ENCODE measurements at regions of chr20 and their contacts with region 1.

Region 1: DNA sequence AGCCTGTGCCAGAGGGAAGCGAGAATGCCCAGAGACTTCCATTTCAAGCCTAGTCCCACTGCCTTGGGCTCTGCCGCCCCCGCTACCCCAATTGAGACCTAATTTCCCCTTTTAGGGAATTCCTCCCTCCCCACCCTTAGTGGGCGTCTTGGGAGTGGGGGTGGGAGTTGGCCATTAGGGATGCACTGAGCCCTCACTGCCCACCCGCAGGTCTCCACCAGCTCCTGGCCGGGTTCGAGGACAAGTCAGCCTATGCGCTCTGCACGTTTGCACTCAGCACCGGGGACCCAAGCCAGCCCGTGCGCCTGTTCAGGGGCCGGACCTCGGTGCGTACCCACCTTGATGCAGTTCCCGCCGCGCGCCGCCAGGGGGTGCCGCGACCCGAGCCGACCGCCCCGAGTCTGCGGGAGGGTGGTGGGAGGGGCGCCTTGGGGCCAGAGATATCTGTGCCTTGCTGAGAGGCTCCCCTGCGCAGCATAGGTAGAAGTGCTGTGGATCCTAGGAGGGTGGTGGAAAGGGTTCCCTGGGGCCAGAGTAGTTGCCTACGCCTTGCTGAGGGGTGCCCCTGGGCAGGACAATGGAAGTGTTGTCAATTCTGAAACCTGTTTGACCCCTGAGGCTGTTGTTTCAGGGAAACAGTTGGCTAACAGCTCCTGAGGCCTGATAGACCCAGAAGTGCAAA is 9.2 kb downstream of the ITPA start:
- DNase-seq: peak; percentile 79
- ATAC-seq: peak; percentile 70
- H3K4me3 ChIP-seq: no peak overlapping the region
- H3K4me3 Mint-ChIP-seq: no peak overlapping the region
- H3K27ac ChIP-seq: no peak overlapping the region
- H3K27ac Mint-ChIP-seq: no peak overlapping the region
- H3K4me1 ChIP-seq: peaks cover 20 to 28% of the 10 kb centered on the region in 2 donors
- H3K4me1 Mint-ChIP-seq: peaks cover 19% of the 10 kb centered on the region
- H3K27me3 ChIP-seq: no peaks in the 10 kb centered on the region
- H3K27me3 Mint-ChIP-seq: no peaks in the 10 kb centered on the region
- CTCF ChIP-seq: peak; percentile 96

Region 2: GRCh38 chr20:3204124-3204822 is 14.2 kb before region 1 on chr20 and contains the start of gene DDRGK1:
- CTCF ChIA-PET with region 1: interaction called, 5 read pairs
- POLR2A ChIA-PET with region 1: interaction called, 9 read pairs
- intact Hi-C with region 1: loop called (anchors 1 kb)
- DNase-seq: peak; percentile 96
- ATAC-seq: peak; percentile 93
- H3K4me3 ChIP-seq: peak within 1 kb of the TSS; percentile 73 to 89 (median 84)
- H3K4me3 Mint-ChIP-seq: peak within 1 kb of the TSS; percentile 97
- H3K27ac ChIP-seq: peak within 1 kb of the TSS; percentile 80
- H3K27ac Mint-ChIP-seq: peak within 1 kb of the TSS; percentile 96
- H3K4me1 ChIP-seq: peaks cover 15% of the 10 kb centered on the region in 2 donors
- H3K4me1 Mint-ChIP-seq: peaks cover 20% of the 10 kb centered on the region
- H3K27me3 ChIP-seq: no peaks in the 10 kb centered on the region
- H3K27me3 Mint-ChIP-seq: no peaks in the 10 kb centered on the region
- CTCF ChIP-seq: no peak
- total RNA-seq, gene DDRGK1: 51.9 and 55.5 TPM in 2 replicates

Region 3: GRCh38 chr20:3239026-3239866 is 20.8 kb after region 1 on chr20 and contains the start of gene SLC4A11:
- CTCF ChIA-PET with region 1: interaction called, 6 read pairs
- POLR2A ChIA-PET with region 1: no interaction called
- intact Hi-C with region 1: loop called (anchors 2 kb)
- DNase-seq: peak; percentile 60
- ATAC-seq: peak; percentile 62
- H3K4me3 ChIP-seq: peak within 1 kb of the TSS; percentile 23 to 64 (median 56)
- H3K4me3 Mint-ChIP-seq: peak within 1 kb of the TSS; percentile 92
- H3K27ac ChIP-seq: no peak within 1 kb of the TSS
- H3K27ac Mint-ChIP-seq: peak within 1 kb of the TSS; percentile 15
- H3K4me1 ChIP-seq: peaks cover 18 to 22% of the 10 kb centered on the region in 2 donors
- H3K4me1 Mint-ChIP-seq: peaks cover 19% of the 10 kb centered on the region
- H3K27me3 ChIP-seq: peaks cover 0 to 70% (median 23%) of the 10 kb centered on the region in 4 experiments
- H3K27me3 Mint-ChIP-seq: peaks cover 48% of the 10 kb centered on the region
- CTCF ChIP-seq: no peak
- total RNA-seq, gene SLC4A11: 1.6 and 2.7 TPM in 2 replicates

Region 4: GRCh38 chr20:3276680-3277015 is 58.2 kb after region 1 on chr20:
- CTCF ChIA-PET with region 1: interaction called, 14 read pairs
- POLR2A ChIA-PET with region 1: no interaction called
- intact Hi-C with region 1: no loop called
- DNase-seq: no peak
- ATAC-seq: no peak
- H3K4me3 ChIP-seq: no peak overlapping the region
- H3K4me3 Mint-ChIP-seq: no peak overlapping the region
- H3K27ac ChIP-seq: no peak overlapping the region
- H3K27ac Mint-ChIP-seq: no peak overlapping the region
- H3K4me1 ChIP-seq: no peaks in the 10 kb centered on the region
- H3K4me1 Mint-ChIP-seq: no peaks in the 10 kb centered on the region
- H3K27me3 ChIP-seq: no peaks in the 10 kb centered on the region
- H3K27me3 Mint-ChIP-seq: no peaks in the 10 kb centered on the region
- CTCF ChIP-seq: no peak

Region 5: GRCh38 chr20:3312940-3313682 is 94.7 kb after region 1 on chr20:
- CTCF ChIA-PET with region 1: interaction called, 76 read pairs
- POLR2A ChIA-PET with region 1: no interaction called
- intact Hi-C with region 1: no loop called
- DNase-seq: no peak
- ATAC-seq: no peak
- H3K4me3 ChIP-seq: no peak overlapping the region
- H3K4me3 Mint-ChIP-seq: no peak overlapping the region
- H3K27ac ChIP-seq: no peak overlapping the region
- H3K27ac Mint-ChIP-seq: no peak overlapping the region
- H3K4me1 ChIP-seq: no peaks in the 10 kb centered on the region
- H3K4me1 Mint-ChIP-seq: no peaks in the 10 kb centered on the region
- H3K27me3 ChIP-seq: no peaks in the 10 kb centered on the region
- H3K27me3 Mint-ChIP-seq: no peaks in the 10 kb centered on the region
- CTCF ChIP-seq: no peak

Region 6: GRCh38 chr20:3470627-3471396 is 252.4 kb after region 1 on chr20 and contains the start of gene ATRN:
- CTCF ChIA-PET with region 1: no interaction called
- POLR2A ChIA-PET with region 1: no interaction called
- intact Hi-C with region 1: loop called (anchors 5 kb)
- DNase-seq: peak; percentile 94
- ATAC-seq: peak; percentile 92
- H3K4me3 ChIP-seq: peak within 1 kb of the TSS; percentile 49 to 88 (median 72)
- H3K4me3 Mint-ChIP-seq: peak within 1 kb of the TSS; percentile 90
- H3K27ac ChIP-seq: peak within 1 kb of the TSS; percentile 46 to 72
- H3K27ac Mint-ChIP-seq: peak within 1 kb of the TSS; percentile 88
- H3K4me1 ChIP-seq: peaks cover 25 to 35% of the 10 kb centered on the region in 2 donors
- H3K4me1 Mint-ChIP-seq: peaks cover 36% of the 10 kb centered on the region
- H3K27me3 ChIP-seq: peaks cover 0 to 2% (median under 1%) of the 10 kb centered on the region in 4 experiments
- H3K27me3 Mint-ChIP-seq: peaks cover 6% of the 10 kb centered on the region
- CTCF ChIP-seq: no peak
- total RNA-seq, gene ATRN: 18.3 and 19.5 TPM in 2 replicates

Measured in B cell (primary cell).